Activated CD4-positive, alpha-beta memory T cell treated with anti-CD3 and anti-CD28 coated beads for 36 hours (primary cell): ENCODE measurements at regions of chr19 and their contacts with region 1.

Region 1: DNA sequence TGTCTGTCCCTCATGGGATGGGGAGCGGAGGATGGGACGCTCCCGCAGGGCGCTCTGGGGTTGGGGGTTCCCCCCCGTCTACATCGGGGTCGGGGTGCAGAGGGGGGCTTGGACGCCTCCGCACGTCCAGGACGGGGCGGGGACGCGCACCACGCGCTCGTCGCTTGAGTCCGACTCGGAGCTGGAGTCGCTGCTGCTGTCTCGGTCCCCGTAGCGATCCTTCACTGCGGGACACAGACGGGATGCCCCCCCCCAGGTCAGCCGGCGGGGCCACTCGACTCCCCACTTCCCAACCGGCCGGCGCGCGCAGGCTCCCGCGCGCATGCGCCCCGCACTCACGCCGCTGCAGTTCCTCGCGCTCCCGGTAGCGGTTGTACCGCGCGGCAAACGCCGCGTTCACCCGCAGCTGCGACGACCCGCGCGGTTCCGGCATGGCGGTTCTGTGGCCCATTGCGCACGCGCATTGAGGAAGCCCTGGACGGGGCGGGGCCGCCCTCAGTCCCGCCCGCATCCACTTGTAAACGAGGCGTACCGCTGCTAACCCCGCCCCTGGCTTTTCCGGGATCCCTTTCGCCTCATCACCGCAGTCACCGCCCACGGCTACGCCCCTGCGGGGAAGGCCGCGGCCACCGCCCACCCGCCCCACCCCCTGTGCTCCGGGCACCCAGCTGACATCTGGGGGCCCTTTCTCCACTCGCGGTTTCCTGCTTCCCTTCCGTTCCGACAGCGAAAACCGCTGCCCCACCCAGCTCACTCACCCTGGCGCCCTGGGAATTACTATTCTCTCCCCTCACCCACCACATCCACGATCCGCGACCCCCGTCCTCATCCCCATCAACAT is at the start of gene KRI1:
- DNase-seq: peak; percentile 99
- H3K4me3 Mint-ChIP-seq: peak within 1 kb of the TSS; percentile 98
- H3K27ac Mint-ChIP-seq: peak within 1 kb of the TSS; percentile 98
- H3K4me1 Mint-ChIP-seq: peaks cover 31% of the 10 kb centered on the region
- H3K27me3 Mint-ChIP-seq: no peaks in the 10 kb centered on the region
- total RNA-seq, gene KRI1: 46.2 to 52.3 TPM

Region 2: GRCh38 chr19:10403137-10404021 is 162.4 kb before region 1 on chr19 and contains the start of gene CDC37:
- CTCF ChIA-PET with region 1: interaction called, 3 read pairs
- POLR2A ChIA-PET with region 1: no interaction called
- intact Hi-C with region 1: loop called (anchors 2 kb)
- DNase-seq: peak; percentile 99
- H3K4me3 Mint-ChIP-seq: peak within 1 kb of the TSS; percentile 89
- H3K27ac Mint-ChIP-seq: peak within 1 kb of the TSS; percentile 84
- H3K4me1 Mint-ChIP-seq: peaks cover 67% of the 10 kb centered on the region
- H3K27me3 Mint-ChIP-seq: no peaks in the 10 kb centered on the region
- total RNA-seq, gene CDC37: 189 to 207 TPM

Region 3: GRCh38 chr19:10543420-10544241 is 22.2 kb before region 1 on chr19 and contains the start of gene ATG4D:
- CTCF ChIA-PET with region 1: interaction called, 6 read pairs
- POLR2A ChIA-PET with region 1: interaction called, 4 read pairs
- intact Hi-C with region 1: loop called (anchors 1 kb)
- DNase-seq: peak; percentile 85
- H3K4me3 Mint-ChIP-seq: peak within 1 kb of the TSS; percentile 88
- H3K27ac Mint-ChIP-seq: peak within 1 kb of the TSS; percentile 84
- H3K4me1 Mint-ChIP-seq: peaks cover 14% of the 10 kb centered on the region
- H3K27me3 Mint-ChIP-seq: peaks cover 8% of the 10 kb centered on the region
- total RNA-seq, gene ATG4D: 23.8 to 26.7 TPM

Region 4: GRCh38 chr19:10636304-10636972 is 70.7 kb after region 1 on chr19:
- CTCF ChIA-PET with region 1: no interaction called
- POLR2A ChIA-PET with region 1: no interaction called
- intact Hi-C with region 1: no loop called
- DNase-seq: no peak
- H3K4me3 Mint-ChIP-seq: no peak overlapping the region
- H3K27ac Mint-ChIP-seq: no peak overlapping the region
- H3K4me1 Mint-ChIP-seq: peaks cover 5% of the 10 kb centered on the region
- H3K27me3 Mint-ChIP-seq: no peaks in the 10 kb centered on the region

Region 5: DNA sequence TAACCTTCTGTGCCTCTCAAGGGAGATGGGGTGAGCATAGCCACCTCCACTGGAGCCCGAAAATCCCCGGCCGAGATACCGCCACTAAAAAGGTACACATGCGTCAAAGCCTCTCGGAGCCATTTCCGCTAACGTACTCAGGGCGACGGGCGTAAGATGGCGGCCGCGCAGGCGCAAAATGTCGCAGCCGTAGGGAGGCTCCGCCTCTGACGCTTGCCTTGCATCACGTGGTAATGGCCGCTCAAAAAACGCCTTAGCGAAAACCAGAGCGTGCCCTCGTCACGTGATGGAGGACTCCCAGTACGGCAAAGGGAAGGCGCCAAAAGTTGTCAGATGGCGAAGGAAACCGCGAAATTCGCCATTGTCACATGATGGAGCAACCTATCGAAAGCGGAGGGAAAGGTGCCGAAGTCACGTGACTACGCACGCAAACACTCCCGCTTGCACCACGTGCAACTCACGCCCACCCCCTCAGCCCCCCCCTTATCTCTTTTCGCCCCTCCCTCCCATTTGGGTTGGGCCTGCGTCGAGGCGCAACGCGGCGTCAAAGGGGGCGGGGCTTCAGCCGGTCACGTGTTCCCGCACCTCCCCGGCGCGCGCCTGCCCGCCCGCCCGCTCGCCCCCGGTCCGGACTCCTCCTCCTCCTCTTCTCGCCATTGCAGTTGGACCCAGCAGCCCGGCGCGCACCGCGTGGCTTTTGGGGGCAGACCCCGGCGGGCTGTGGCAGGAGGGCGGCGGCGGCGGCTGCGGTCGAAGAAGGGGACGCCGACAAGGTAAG is 88.1 kb after region 1 on chr19 and contains the start of gene ILF3:
- CTCF ChIA-PET with region 1: interaction called, 3 read pairs
- POLR2A ChIA-PET with region 1: no interaction called
- intact Hi-C with region 1: loop called (anchors 1 kb)
- DNase-seq: peak; percentile 100
- H3K4me3 Mint-ChIP-seq: peak within 1 kb of the TSS; percentile 90
- H3K27ac Mint-ChIP-seq: peak within 1 kb of the TSS; percentile 96
- H3K4me1 Mint-ChIP-seq: peaks cover 35% of the 10 kb centered on the region
- H3K27me3 Mint-ChIP-seq: no peaks in the 10 kb centered on the region
- total RNA-seq, gene ILF3: 355 to 357 TPM

Region 6: DNA sequence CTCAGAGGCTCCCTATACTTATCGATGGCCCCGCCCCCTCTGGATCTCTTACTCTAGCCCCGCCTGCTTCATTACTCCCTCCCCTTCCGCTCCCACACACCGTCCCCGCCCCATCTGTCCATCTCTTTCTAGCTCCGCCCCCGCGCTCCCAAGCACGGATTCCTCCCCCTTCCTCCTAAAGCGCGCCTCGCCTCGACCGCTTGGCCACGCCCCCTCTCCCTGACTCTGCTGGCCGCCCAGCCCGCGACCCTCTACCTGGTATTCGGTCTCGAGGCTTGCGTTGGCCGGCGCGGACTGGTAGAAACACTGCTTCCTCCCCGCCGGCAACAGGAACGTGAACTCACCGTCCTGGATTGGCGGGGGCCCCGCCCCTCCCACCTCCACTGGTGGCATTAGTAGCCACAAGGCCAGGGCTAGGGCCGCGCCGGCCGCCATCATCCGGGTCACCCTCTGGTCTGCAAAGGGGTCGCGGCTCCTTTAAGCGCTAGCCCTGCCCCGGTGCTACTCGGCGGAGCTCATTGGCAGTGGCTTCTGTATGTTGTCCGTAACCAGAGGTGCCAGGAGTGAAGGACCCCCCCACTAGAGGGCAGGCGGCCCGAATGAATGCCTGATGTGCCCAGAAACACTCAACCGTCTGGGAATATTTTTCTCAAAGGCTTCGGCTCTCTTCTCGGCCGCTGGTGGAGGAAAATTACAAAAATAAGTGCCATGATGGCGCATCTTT is 270.1 kb after region 1 on chr19 and contains the start of gene TMED1:
- CTCF ChIA-PET with region 1: no interaction called
- POLR2A ChIA-PET with region 1: no interaction called
- intact Hi-C with region 1: loop called (anchors 5 kb)
- DNase-seq: peak; percentile 98
- H3K4me3 Mint-ChIP-seq: peak within 1 kb of the TSS; percentile 94
- H3K27ac Mint-ChIP-seq: peak within 1 kb of the TSS; percentile 99
- H3K4me1 Mint-ChIP-seq: peaks cover 15% of the 10 kb centered on the region
- H3K27me3 Mint-ChIP-seq: no peaks in the 10 kb centered on the region
- total RNA-seq, gene TMED1: 18.8 to 19.1 TPM

Region 7: DNA sequence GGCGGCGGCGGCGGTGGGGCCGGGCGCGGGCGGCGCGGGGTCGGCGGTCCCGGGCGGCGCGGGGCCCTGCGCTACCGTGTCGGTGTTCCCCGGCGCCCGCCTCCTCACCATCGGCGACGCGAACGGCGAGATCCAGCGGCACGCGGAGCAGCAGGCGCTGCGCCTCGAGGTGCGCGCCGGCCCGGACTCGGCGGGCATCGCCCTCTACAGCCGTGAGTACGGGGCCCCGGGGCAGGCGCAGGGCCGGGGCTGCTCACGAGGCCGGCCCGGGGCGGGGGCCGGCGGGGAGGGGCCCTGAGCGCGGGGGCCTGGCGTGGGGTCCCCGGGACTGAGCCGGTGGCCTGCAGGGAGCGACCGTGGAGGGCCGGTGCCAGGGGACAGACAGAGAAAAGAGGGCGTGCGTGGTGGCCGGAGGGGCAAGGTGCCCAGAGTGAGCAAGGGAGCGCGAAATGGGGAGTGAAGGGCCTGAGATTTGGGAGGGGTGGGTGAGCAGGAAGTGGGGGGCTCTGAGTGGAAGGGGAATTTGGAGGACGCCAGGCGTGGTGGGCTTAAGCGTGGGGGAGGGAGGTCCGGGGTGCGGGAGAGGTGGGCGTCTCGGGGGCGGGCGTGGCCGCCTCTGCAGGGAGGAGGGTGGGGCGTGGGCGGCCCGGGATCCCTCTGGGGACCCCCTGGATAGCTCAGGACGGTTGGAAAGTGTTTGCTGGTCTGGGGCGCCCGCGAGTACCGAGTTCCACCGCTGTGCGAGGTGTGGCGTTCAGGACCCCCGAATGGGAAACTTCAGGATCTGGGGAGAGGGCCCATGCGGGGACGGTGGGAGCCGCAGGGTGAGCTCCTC is 306.1 kb after region 1 on chr19:
- CTCF ChIA-PET with region 1: no interaction called
- POLR2A ChIA-PET with region 1: no interaction called
- intact Hi-C with region 1: no loop called
- DNase-seq: peak; percentile 37
- H3K4me3 Mint-ChIP-seq: peak overlapping the region; percentile 79
- H3K27ac Mint-ChIP-seq: peak overlapping the region; percentile 55
- H3K4me1 Mint-ChIP-seq: peaks cover 29% of the 10 kb centered on the region
- H3K27me3 Mint-ChIP-seq: no peaks in the 10 kb centered on the region